ENCODE measurements at regions of chr7 and their contacts with region 1.

Region 1: GRCh38 chr7:101688183-101688831 is 59.2 kb upstream of the MYL10 start:
- DNase-seq: peak; percentile 88
- H3K4me3 ChIP-seq: peak overlapping the region in 3 of 4 donors; percentile 10 to 34 (median 28)
- H3K27ac ChIP-seq: no peak overlapping the region
- H3K4me1 ChIP-seq: peaks cover 0 to 13% (median 9%) of the 10 kb centered on the region in 4 donors
- H3K27me3 ChIP-seq: no peaks in the 10 kb centered on the region
- CTCF ChIP-seq: peak; percentile 92 to 95 (median 93)
- EP300 ChIP-seq: no peak
- POLR2A ChIP-seq: no peak

Region 2: GRCh38 chr7:101743241-101743994 is 55.1 kb after region 1 on chr7:
- intact Hi-C with region 1: loop called (anchors 2 kb)
- DNase-seq: peak; percentile 77
- H3K4me3 ChIP-seq: peak overlapping the region; percentile 8 to 48 (median 45)
- H3K27ac ChIP-seq: no peak overlapping the region
- H3K4me1 ChIP-seq: peaks cover 0 to 14% (median 10%) of the 10 kb centered on the region in 4 donors
- H3K27me3 ChIP-seq: peaks cover 2 to 17% (median 3%) of the 10 kb centered on the region in 3 donors
- CTCF ChIP-seq: peak in 3 of 4 experiments; percentile 6 to 63 (median 42)
- EP300 ChIP-seq: no peak
- POLR2A ChIP-seq: no peak

Region 3: DNA sequence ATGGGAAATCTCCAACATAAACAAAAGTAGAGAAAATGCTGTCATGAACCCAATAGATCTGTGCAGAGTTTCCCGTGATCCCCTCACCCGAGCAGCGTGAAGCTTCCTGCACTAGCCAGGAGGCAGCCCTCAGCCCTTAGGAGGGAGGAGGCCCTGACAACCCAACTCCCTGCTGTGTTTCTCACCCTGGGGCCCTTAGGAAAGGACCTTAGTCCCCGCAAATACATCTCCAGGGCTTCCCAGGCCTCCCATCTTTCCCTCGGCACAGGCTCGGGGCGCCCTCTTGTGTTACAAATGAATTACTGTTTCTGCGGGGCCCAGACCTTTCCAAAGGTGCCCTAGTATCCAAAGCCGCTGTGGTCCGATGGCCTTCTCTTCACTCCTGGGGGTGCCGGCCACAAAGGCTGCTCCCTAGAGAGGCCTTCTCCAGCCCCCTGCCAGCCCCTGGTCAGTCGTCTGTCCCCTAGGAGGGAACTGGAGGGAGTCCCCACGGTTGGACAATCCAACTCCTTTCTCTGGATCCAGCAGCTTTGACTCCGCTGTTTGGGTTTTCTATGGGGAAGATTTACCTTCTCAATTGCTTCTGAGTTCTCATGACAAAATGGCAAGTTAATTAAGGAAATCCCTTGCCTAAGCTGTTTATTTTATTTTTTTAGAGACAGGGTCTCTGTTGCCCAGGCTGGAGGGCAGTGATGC is 548.4 kb after region 1 on chr7:
- intact Hi-C with region 1: loop called (anchors 1 kb)
- DNase-seq: peak; percentile 75
- H3K4me3 ChIP-seq: no peak overlapping the region
- H3K27ac ChIP-seq: no peak overlapping the region
- H3K4me1 ChIP-seq: peaks cover 0 to 7% (median 0%) of the 10 kb centered on the region in 4 donors
- H3K27me3 ChIP-seq: no peaks in the 10 kb centered on the region
- CTCF ChIP-seq: peak; percentile 37 to 80 (median 72)
- EP300 ChIP-seq: no peak
- POLR2A ChIP-seq: no peak

Region 4: GRCh38 chr7:102272075-102272917 is 584.0 kb after region 1 on chr7:
- intact Hi-C with region 1: loop called (anchors 1 kb)
- DNase-seq: peak; percentile 85
- H3K4me3 ChIP-seq: no peak overlapping the region
- H3K27ac ChIP-seq: no peak overlapping the region
- H3K4me1 ChIP-seq: peaks cover 0 to 8% (median 7%) of the 10 kb centered on the region in 4 donors
- H3K27me3 ChIP-seq: no peaks in the 10 kb centered on the region
- CTCF ChIP-seq: peak; percentile 80 to 94 (median 88)
- EP300 ChIP-seq: no peak
- POLR2A ChIP-seq: no peak